ENCODE measurements at regions of chr11 and their contacts with region 1.

Region 1: GRCh38 chr11:88357323-88358039 is 19.9 kb upstream of the CTSC start:
- ATAC-seq: peak in 5 of 8 experiments; percentile 36 to 76 (median 56)
- H3K4me3 ChIP-seq: no peak overlapping the region
- H3K27ac ChIP-seq: no peak overlapping the region
- H3K4me1 ChIP-seq: peaks cover 0 to 9% of the 10 kb centered on the region in 2 donors

Region 2: GRCh38 chr11:88266919-88267318 is 90.6 kb before region 1 on chr11:
- in situ Hi-C with region 1: loop called in 1 of 9 experiments (anchors 25 kb)
- ATAC-seq: no peak
- H3K4me3 ChIP-seq: no peak overlapping the region
- H3K27ac ChIP-seq: no peak overlapping the region
- H3K4me1 ChIP-seq: no peaks in the 10 kb centered on the region

Region 3: DNA sequence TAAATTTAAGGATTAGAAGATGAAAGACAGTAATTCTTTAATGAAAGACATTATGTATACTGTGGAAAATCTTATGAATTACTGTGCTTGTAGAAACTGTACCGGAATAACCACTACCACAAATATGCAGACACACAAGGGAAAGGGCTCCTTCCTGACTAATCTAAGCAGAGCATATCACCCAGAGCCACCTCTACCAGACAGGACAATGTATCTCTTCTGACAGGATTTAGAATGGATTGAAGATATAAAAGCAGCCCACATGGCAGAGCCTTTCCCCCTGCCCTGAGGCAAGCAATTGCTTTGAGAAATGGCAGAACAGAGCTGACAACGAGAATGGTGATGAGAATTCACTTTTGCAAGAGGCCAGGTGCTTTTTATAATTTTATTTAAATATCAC is 989.6 kb after region 1 on chr11:
- in situ Hi-C with region 1: no loop called
- ATAC-seq: peak in 5 of 8 experiments; percentile 48 to 81 (median 50)
- H3K4me3 ChIP-seq: no peak overlapping the region
- H3K27ac ChIP-seq: peak overlapping the region in 1 of 2 donors; percentile 32
- H3K4me1 ChIP-seq: peaks cover 0 to 14% of the 10 kb centered on the region in 2 donors

Measured in motor neuron (in vitro differentiated cells).